Right ventricle myocardium superior (tissue), 1 donor: ENCODE measurements at regions of chr17 and their contacts with region 1.

Region 1: GRCh38 chr17:82551779-82552457 is 32.4 kb downstream of the FOXK2 start:
- DNase-seq: peak; percentile 84
- ATAC-seq: peak; percentile 72

Region 2: DNA sequence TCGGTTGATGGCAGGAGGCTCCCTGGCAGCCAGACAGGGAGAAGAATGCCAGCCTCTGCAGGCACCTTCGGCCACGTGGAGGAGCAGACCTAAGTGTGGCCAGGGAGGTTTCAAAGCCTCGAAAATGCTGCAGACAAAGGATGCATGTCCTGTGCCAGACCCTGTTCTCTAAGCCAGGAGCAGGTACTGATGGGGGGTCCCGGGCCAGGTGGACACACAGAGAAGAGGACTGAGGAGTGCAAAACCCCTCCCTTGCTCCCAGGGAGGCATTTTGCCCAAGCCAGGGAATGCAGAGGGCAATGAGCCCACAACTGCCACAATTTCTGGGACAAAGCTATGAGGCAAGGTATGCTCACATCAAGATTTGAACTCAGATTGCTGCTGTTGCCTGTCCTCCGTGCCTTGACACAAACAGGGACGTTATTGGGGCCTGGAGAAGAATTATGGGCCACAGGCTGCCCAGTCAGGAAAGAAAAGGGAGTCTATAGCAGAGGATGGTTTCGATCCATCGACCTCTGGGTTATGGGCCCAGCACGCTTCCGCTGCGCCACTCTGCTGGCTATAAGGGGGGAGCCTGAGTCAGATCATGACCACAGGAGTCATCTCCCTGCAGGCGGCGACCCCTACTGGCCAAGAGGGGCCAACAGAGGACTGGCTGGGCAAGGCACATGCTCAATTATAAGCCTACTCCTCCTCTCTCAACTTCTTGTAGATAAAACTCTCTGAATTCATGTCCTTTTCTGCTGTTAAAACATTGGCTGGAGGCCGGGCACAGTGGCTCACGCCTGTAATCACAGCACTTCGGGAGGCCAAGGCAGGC is 57.5 kb before region 1 on chr17:
- intact Hi-C with region 1: loop called (anchors 10 kb)
- DNase-seq: peak; percentile 91
- ATAC-seq: peak; percentile 79